Naive thymus-derived CD4-positive, alpha-beta T cell (primary cell): ENCODE measurements at regions of chr9 and their contacts with region 1.

Region 1: DNA sequence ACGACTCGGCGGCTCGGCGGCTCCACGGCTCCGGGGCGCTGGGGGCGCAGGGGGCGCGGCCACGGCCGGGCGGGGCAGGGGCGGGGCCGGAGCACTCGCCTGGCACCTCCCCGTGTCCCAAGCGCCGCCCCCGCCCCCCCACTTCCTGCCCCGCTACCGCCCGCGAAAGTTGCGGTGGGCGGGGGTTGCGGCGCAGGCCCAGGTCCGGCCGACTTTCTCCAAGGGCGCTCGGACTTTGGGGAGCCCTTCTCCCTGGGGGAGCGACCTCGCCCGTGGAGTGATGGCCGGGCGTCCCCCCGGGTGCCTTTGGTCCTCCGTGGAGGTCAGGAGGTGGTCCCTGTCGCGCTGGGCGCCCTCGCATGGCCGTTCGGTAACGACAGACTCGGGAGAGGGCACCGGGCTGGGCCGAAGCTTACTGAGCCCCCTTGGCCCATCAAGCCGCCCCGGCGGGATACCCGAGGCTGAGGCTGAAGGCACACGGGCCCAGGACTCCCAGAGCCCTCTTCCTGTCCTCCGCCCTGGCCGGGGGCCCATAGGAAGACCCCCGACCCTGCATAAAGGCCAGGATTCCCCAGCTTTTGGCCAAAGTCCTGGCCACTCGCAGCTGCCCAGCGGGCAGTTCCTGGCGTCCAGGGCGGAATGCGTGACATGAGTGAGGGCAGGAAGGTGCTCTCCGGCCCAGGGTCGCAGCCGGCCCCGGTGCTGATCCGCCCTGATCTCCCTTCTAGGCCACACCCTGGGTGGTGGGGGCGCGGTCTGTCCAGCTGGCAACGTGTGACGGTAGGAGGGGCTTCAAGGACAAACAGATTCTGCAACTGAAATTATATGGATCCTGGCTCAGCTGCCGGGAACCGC is 883 bp upstream of the VAV2 start:
- DNase-seq: peak; percentile 47 to 77 (median 63)
- ATAC-seq: peak; percentile 89
- H3K4me3 ChIP-seq: peak overlapping the region; percentile 77
- H3K4me3 Mint-ChIP-seq: peak overlapping the region; percentile 62 to 89 (median 76)
- H3K27ac ChIP-seq: peak overlapping the region; percentile 30
- H3K27ac Mint-ChIP-seq: no peak overlapping the region
- H3K4me1 ChIP-seq: peaks cover 9 to 12% of the 10 kb centered on the region in 2 donors
- H3K4me1 Mint-ChIP-seq: peaks cover 0 to 8% (median 0%) of the 10 kb centered on the region in 7 donors
- H3K27me3 ChIP-seq: no peaks in the 10 kb centered on the region
- H3K27me3 Mint-ChIP-seq: peaks cover 0 to 26% (median 4%) of the 10 kb centered on the region in 5 donors

Region 2: GRCh38 chr9:133121198-133121939 is 871.6 kb before region 1 on chr9 and contains the start of gene RALGDS:
- CTCF ChIA-PET with region 1: no interaction called
- POLR2A ChIA-PET with region 1: no interaction called
- intact Hi-C with region 1: loop called in 1 of 2 experiments (anchors 2 kb)
- DNase-seq: peak; percentile 79 to 93 (median 88)
- ATAC-seq: peak; percentile 91
- H3K4me3 ChIP-seq: peak within 1 kb of the TSS; percentile 58
- H3K4me3 Mint-ChIP-seq: peak within 1 kb of the TSS; percentile 78 to 88 (median 82)
- H3K27ac ChIP-seq: peak within 1 kb of the TSS; percentile 93
- H3K27ac Mint-ChIP-seq: peak within 1 kb of the TSS; percentile 58 to 99 (median 98)
- H3K4me1 ChIP-seq: peaks cover 22 to 52% of the 10 kb centered on the region in 2 donors
- H3K4me1 Mint-ChIP-seq: peaks cover 27 to 74% (median 47%) of the 10 kb centered on the region in 7 donors
- H3K27me3 ChIP-seq: no peaks in the 10 kb centered on the region
- H3K27me3 Mint-ChIP-seq: no peaks in the 10 kb centered on the region
- total RNA-seq, gene RALGDS: 73.9 to 123 (median 79.7) TPM

Region 3: DNA sequence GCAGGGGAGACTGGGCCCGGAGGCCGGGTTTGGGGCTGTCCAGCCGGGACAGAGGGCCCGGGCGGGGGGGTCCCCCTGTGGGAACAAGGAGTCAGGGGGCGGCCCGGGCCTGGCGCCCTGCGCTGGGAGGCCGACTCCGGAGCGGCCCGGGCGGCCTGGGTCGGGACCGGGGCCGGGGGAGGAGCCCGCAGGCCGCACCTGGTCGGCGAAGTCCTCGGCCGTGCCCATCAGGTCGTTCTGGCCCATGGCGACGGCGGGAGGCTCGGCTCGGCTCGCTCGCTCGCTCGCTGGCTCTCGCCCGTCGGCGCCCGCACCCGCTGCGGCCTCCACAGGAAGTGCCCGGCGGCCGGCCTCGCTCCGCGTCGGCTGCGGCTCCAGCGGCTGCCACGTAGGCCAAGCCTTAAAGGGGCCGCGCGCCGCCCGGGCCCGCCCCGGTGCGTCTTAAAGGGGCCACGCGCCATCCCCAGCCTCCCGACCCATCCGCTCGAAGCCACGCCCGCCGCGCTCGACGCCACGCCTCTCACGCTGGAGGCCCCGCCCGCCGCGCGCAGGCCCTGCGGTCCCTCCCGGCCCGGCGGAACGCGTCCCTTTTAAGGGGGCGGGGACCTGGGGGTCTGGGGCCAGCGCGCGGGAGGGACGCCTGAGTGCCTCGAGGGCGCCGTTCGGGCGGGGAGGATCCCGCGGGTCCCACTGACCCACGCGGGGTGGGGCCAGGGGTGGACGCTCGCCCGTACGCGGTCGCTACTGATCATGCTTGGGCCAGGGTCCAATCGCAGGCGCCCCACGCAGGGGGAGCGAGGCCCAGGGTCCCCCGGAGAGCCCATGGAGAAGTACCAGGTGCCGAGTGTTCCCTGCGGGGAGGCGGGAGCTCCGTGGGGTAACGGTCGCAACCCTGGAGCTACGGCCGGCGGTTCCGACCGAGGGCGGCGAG is 617.0 kb before region 1 on chr9 and contains the starts of genes STKLD1 and SURF4:
- CTCF ChIA-PET with region 1: no interaction called
- POLR2A ChIA-PET with region 1: no interaction called
- intact Hi-C with region 1: no loop called
- DNase-seq: peak; percentile 86 to 99 (median 93)
- ATAC-seq: peak; percentile 95
- H3K4me3 ChIP-seq: peak within 1 kb of the TSS; percentile 58
- H3K4me3 Mint-ChIP-seq: peak within 1 kb of the TSS; percentile 84 to 98 (median 92)
- H3K27ac ChIP-seq: peak within 1 kb of the TSS; percentile 98
- H3K27ac Mint-ChIP-seq: peak within 1 kb of the TSS; percentile 72 to 99 (median 96)
- H3K4me1 ChIP-seq: peaks cover 31 to 38% of the 10 kb centered on the region in 2 donors
- H3K4me1 Mint-ChIP-seq: peaks cover 26 to 47% (median 34%) of the 10 kb centered on the region in 7 donors
- H3K27me3 ChIP-seq: no peaks in the 10 kb centered on the region
- H3K27me3 Mint-ChIP-seq: peaks cover 0 to 4% (median 0%) of the 10 kb centered on the region in 5 donors
- total RNA-seq, gene STKLD1: 1.1 to 1.8 (median 1.5) TPM
- total RNA-seq, gene SURF4: 72.5 to 196 (median 75.1) TPM

Region 4: GRCh38 chr9:133782157-133783130 is 210.6 kb before region 1 on chr9:
- CTCF ChIA-PET with region 1: interaction called, 70 read pairs
- POLR2A ChIA-PET with region 1: interaction called, 4 read pairs
- intact Hi-C with region 1: loop called (anchors 1 kb)
- DNase-seq: peak; percentile 24 to 65 (median 57)
- ATAC-seq: peak; percentile 64
- H3K4me3 ChIP-seq: no peak overlapping the region
- H3K4me3 Mint-ChIP-seq: no peak overlapping the region
- H3K27ac ChIP-seq: no peak overlapping the region
- H3K27ac Mint-ChIP-seq: no peak overlapping the region
- H3K4me1 ChIP-seq: no peaks in the 10 kb centered on the region
- H3K4me1 Mint-ChIP-seq: peaks cover 0 to 5% (median 0%) of the 10 kb centered on the region in 7 donors
- H3K27me3 ChIP-seq: no peaks in the 10 kb centered on the region
- H3K27me3 Mint-ChIP-seq: no peaks in the 10 kb centered on the region

Region 5: DNA sequence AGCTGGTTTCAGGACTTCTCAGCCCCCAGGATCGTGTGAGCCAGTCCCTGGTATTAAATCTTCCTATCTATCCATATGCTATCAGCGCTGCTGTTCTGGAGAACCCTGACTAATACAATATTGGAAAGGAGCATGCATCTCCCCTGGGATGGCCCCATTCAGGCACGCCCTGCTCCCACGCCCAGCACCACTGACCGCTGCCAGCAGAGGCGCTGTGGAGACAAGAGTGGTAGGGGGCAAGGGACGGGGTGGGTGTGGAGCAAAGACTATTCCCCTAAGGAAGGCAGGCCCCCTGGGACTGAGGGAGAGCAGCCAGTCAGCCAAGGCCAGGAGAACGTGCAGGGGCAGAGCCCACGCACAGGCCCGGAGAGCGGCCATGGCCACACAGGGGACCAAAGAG is 116.9 kb before region 1 on chr9:
- CTCF ChIA-PET with region 1: no interaction called
- POLR2A ChIA-PET with region 1: no interaction called
- intact Hi-C with region 1: loop called in 1 of 2 experiments (anchors 10 kb)
- DNase-seq: no peak
- ATAC-seq: no peak
- H3K4me3 ChIP-seq: no peak overlapping the region
- H3K4me3 Mint-ChIP-seq: no peak overlapping the region
- H3K27ac ChIP-seq: no peak overlapping the region
- H3K27ac Mint-ChIP-seq: no peak overlapping the region
- H3K4me1 ChIP-seq: no peaks in the 10 kb centered on the region
- H3K4me1 Mint-ChIP-seq: peaks cover 0 to 7% (median 0%) of the 10 kb centered on the region in 7 donors
- H3K27me3 ChIP-seq: no peaks in the 10 kb centered on the region
- H3K27me3 Mint-ChIP-seq: peaks cover 0 to under 1% (median 0%) of the 10 kb centered on the region in 5 donors

Region 6: GRCh38 chr9:133945314-133945975 is 47.6 kb before region 1 on chr9:
- CTCF ChIA-PET with region 1: no interaction called
- POLR2A ChIA-PET with region 1: no interaction called
- intact Hi-C with region 1: no loop called
- DNase-seq: no peak
- ATAC-seq: peak; percentile 27
- H3K4me3 ChIP-seq: no peak overlapping the region
- H3K4me3 Mint-ChIP-seq: no peak overlapping the region
- H3K27ac ChIP-seq: no peak overlapping the region
- H3K27ac Mint-ChIP-seq: no peak overlapping the region
- H3K4me1 ChIP-seq: no peaks in the 10 kb centered on the region
- H3K4me1 Mint-ChIP-seq: peaks cover 0 to 3% (median 0%) of the 10 kb centered on the region in 7 donors
- H3K27me3 ChIP-seq: no peaks in the 10 kb centered on the region
- H3K27me3 Mint-ChIP-seq: no peaks in the 10 kb centered on the region

Region 7: GRCh38 chr9:134024828-134025605 is 32.0 kb after region 1 on chr9 and contains the start of gene BRD3OS:
- CTCF ChIA-PET with region 1: interaction called, 14 read pairs
- POLR2A ChIA-PET with region 1: interaction called, 3 read pairs
- intact Hi-C with region 1: loop called (anchors 1 kb)
- DNase-seq: peak; percentile 80 to 95 (median 91)
- ATAC-seq: peak; percentile 98
- H3K4me3 ChIP-seq: peak within 1 kb of the TSS; percentile 89
- H3K4me3 Mint-ChIP-seq: peak within 1 kb of the TSS; percentile 61 to 85 (median 80)
- H3K27ac ChIP-seq: peak within 1 kb of the TSS; percentile 75
- H3K27ac Mint-ChIP-seq: peak within 1 kb of the TSS; percentile 48 to 86 (median 78)
- H3K4me1 ChIP-seq: peaks cover 5 to 7% of the 10 kb centered on the region in 2 donors
- H3K4me1 Mint-ChIP-seq: peaks cover 0 to 21% (median 12%) of the 10 kb centered on the region in 7 donors
- H3K27me3 ChIP-seq: no peaks in the 10 kb centered on the region
- H3K27me3 Mint-ChIP-seq: no peaks in the 10 kb centered on the region
- total RNA-seq, gene BRD3OS: 8.3 to 19.3 (median 12.7) TPM